Ascending aorta (tissue), 2 donors: ENCODE measurements at regions of chrX and their contacts with region 1.

Region 1: GRCh38 chrX:283115-283845 is 2.1 kb downstream of the PLCXD1 start:
- DNase-seq: peak; percentile 68 to 95
- H3K4me3 ChIP-seq: peak overlapping the region; percentile 44 to 77
- H3K27ac ChIP-seq: peak overlapping the region in 1 of 2 donors; percentile 41
- H3K4me1 ChIP-seq: no peaks in the 10 kb centered on the region
- H3K27me3 ChIP-seq: no peaks in the 10 kb centered on the region
- CTCF ChIP-seq: no peak

Region 2: GRCh38 chrX:318739-319578 is 35.7 kb after region 1 on chrX and contains the start of gene GTPBP6:
- intact Hi-C with region 1: loop called (anchors 1 kb)
- DNase-seq: peak; percentile 99 to 100
- H3K4me3 ChIP-seq: peak within 1 kb of the TSS; percentile 74 to 98
- H3K27ac ChIP-seq: peak within 1 kb of the TSS; percentile 91 to 96
- H3K4me1 ChIP-seq: peaks cover 0 to 16% of the 10 kb centered on the region in 2 donors
- H3K27me3 ChIP-seq: no peaks in the 10 kb centered on the region
- CTCF ChIP-seq: peak in 2 of 3 experiments; percentile 18 to 21
- total RNA-seq, gene GTPBP6: 56.2 TPM

Region 3: DNA sequence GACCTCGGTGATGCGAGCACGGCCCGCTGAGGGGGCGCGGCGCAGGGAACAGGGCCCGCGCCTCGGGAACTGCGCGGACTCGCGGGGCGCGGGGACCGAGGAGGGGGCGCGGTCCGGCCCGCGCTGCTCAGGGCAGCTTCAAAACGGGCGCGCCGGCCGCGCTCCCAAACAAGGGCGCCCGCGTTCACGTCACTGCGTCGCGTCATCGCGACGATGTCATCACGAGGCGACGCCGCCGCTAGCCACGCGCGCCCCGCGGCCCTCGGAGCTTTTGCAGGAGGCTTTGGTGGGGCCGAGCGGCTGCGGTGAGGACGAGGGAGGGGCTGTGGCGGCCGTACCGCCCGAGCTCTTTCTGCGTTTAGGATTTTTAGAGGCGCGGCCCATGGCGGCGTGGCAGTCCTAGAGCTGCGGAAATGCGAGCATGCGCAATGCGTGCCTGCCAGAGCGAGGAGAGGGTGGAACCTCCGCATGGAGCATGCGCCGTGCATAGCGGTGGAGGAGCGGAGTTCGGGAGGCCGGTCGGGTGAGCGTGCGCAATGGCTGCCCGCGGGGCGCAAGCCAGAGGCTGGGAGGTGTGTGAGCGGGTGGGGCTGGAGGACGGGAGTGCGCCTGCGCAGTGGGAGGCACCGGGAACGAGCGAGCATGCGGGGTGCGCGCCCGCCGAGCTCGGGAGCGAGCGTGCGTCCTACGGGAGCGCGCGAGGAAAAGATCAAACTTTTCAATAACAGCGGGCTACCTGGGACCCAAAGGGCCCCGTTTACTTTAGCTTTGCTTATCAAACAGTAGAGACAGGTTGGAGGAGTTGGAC is 103.7 kb after region 1 on chrX and contains the start of gene PPP2R3B:
- intact Hi-C with region 1: loop called (anchors 2 kb)
- DNase-seq: peak; percentile 91 to 99
- H3K4me3 ChIP-seq: peak within 1 kb of the TSS; percentile 72 to 92
- H3K27ac ChIP-seq: peak within 1 kb of the TSS; percentile 94 to 99
- H3K4me1 ChIP-seq: peaks cover 0 to 5% of the 10 kb centered on the region in 2 donors
- H3K27me3 ChIP-seq: no peaks in the 10 kb centered on the region
- CTCF ChIP-seq: no peak
- total RNA-seq, gene PPP2R3B: 43.4 TPM

Region 4: GRCh38 chrX:1749499-1749898 is 1466.2 kb after region 1 on chrX:
- intact Hi-C with region 1: no loop called
- DNase-seq: no peak
- H3K4me3 ChIP-seq: no peak overlapping the region
- H3K27ac ChIP-seq: no peak overlapping the region
- H3K4me1 ChIP-seq: no peaks in the 10 kb centered on the region
- H3K27me3 ChIP-seq: no peaks in the 10 kb centered on the region
- CTCF ChIP-seq: no peak